ENCODE measurements at regions of chr7 and their contacts with region 1.

Region 1: DNA sequence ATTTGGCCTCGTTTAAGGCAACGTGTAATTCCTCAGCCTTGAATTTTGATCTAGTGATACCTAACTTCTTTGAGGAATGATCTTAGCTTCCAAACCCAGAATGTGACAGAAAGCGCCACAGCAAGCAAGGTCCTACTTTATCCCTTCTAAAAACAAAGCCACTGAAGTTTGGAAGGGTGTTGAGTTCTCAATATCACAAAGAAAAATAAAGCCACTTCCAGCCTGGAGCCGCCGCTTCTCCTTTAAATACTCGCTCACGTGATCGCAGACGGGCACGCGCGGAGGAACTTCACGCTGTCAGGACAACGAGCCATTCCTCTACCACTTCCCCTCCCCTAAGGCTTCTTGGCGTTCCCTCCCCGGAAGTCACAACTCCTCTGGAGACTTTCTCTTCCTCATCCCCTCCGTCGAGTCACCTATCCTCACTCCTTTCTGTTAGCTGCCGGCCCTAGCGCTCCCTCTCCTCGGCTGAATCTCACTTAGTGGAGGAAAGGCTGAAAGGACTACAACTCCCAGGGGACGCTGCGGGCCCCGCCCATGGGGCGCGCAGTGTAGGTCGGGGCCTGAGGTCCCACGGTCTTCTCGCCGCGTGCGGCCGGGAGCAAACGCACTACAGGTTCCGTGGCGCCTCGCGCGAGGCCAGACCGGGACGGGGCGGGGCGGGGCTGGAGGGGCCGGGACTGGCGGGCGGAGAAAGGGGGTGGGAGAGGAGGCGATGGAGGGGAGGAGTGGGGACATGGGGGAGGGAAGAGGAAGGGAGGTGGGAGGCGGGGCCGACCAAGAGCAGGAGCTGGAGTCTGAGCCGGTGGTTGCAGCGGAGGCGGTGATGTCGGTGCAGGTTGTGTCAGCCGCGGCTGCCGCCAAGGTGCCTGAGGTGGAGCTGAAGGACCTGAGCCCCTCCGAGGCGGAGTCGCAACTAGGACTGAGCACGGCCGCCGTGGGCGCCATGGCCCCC is at the start of gene AHCYL2:
- DNase-seq: peak; percentile 99
- ATAC-seq: peak; percentile 99
- H3K4me3 ChIP-seq: peak within 1 kb of the TSS; percentile 88
- H3K27ac ChIP-seq: peak within 1 kb of the TSS; percentile 92
- H3K4me1 ChIP-seq: peaks cover 14% of the 10 kb centered on the region
- H3K27me3 ChIP-seq: no peaks in the 10 kb centered on the region
- CTCF ChIP-seq: no peak
- total RNA-seq, gene AHCYL2: 91.0 TPM

Region 2: GRCh38 chr7:129298268-129298893 is 73.9 kb after region 1 on chr7:
- intact Hi-C with region 1: loop called (anchors 10 kb)
- DNase-seq: peak; percentile 54
- ATAC-seq: no peak
- H3K4me3 ChIP-seq: no peak overlapping the region
- H3K27ac ChIP-seq: no peak overlapping the region
- H3K4me1 ChIP-seq: no peaks in the 10 kb centered on the region
- H3K27me3 ChIP-seq: no peaks in the 10 kb centered on the region
- CTCF ChIP-seq: peak; percentile 66

Region 3: GRCh38 chr7:129468087-129468486 is 243.6 kb after region 1 on chr7:
- intact Hi-C with region 1: no loop called
- DNase-seq: no peak
- ATAC-seq: peak; percentile 79 to 83
- H3K4me3 ChIP-seq: peak overlapping the region; percentile 16
- H3K27ac ChIP-seq: peak overlapping the region; percentile 53
- H3K4me1 ChIP-seq: no peaks in the 10 kb centered on the region
- H3K27me3 ChIP-seq: no peaks in the 10 kb centered on the region
- CTCF ChIP-seq: no peak